ENCODE measurements at regions of chr3 and their contacts with region 1.

Region 1: DNA sequence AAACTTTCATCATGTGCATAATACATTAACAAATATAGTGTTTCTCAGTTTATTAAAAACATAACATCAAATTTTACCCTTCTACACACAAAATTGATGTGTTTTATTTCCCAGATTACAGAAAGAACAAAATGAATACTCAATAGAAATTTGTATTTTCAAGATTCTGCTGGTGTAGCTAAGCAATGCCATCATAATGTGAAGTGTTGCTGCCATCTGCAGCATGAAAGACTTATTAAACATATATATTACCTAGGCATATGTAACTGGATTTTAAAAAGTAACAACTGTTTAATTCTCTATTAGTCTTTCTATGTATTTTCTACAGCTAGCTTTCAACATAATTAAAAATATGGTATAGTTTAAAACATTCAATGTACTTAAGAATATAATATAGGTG is 27.5 kb downstream of the PLSCR5 start:
- DNase-seq: peak in 1 of 2 experiments; percentile 11
- H3K4me3 ChIP-seq: no peak overlapping the region
- H3K4me3 Mint-ChIP-seq: no peak overlapping the region
- H3K27ac Mint-ChIP-seq: no peak overlapping the region
- H3K4me1 ChIP-seq: peaks cover 26% of the 10 kb centered on the region
- H3K4me1 Mint-ChIP-seq: peaks cover 27% of the 10 kb centered on the region
- H3K27me3 ChIP-seq: no peaks in the 10 kb centered on the region
- H3K27me3 Mint-ChIP-seq: no peaks in the 10 kb centered on the region
- CTCF ChIP-seq: peak; percentile 19 to 36

Region 2: DNA sequence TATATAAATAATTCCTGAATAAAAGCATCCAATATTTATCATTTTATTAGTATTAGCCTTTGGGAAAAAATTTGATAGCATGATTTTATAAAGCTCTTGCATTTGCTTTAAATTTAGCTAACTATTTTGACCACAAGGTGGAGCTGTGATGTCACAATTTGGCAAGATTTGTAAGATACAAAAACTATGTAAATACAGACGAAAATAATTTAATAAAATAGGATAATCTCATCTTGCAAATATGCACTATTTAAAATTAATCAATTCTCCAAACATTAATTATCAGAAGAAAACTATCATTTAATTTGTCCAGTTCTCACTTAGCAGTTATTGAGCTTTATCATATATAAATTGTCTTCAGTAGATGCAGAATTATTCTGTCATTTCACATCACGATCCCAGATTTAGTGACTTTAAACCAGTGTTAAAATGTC is 512.1 kb before region 1 on chr3:
- CTCF ChIA-PET with region 1: interaction called, 4 read pairs
- POLR2A ChIA-PET with region 1: no interaction called
- intact Hi-C with region 1: loop called (anchors 10 kb)
- DNase-seq: peak in 1 of 2 experiments; percentile 53
- H3K4me3 ChIP-seq: no peak overlapping the region
- H3K4me3 Mint-ChIP-seq: no peak overlapping the region
- H3K27ac Mint-ChIP-seq: no peak overlapping the region
- H3K4me1 ChIP-seq: no peaks in the 10 kb centered on the region
- H3K4me1 Mint-ChIP-seq: no peaks in the 10 kb centered on the region
- H3K27me3 ChIP-seq: no peaks in the 10 kb centered on the region
- H3K27me3 Mint-ChIP-seq: no peaks in the 10 kb centered on the region
- CTCF ChIP-seq: peak; percentile 68 to 69

Region 3: GRCh38 chr3:146218880-146219866 is 358.5 kb before region 1 on chr3:
- CTCF ChIA-PET with region 1: interaction called, 4 read pairs
- POLR2A ChIA-PET with region 1: interaction called, 4 read pairs
- intact Hi-C with region 1: loop called (anchors 1 kb)
- DNase-seq: peak in 1 of 2 experiments; percentile 23
- H3K4me3 ChIP-seq: no peak overlapping the region
- H3K4me3 Mint-ChIP-seq: no peak overlapping the region
- H3K27ac Mint-ChIP-seq: no peak overlapping the region
- H3K4me1 ChIP-seq: peaks cover 40% of the 10 kb centered on the region
- H3K4me1 Mint-ChIP-seq: peaks cover 19% of the 10 kb centered on the region
- H3K27me3 ChIP-seq: no peaks in the 10 kb centered on the region
- H3K27me3 Mint-ChIP-seq: no peaks in the 10 kb centered on the region
- CTCF ChIP-seq: peak; percentile 61 to 74

Region 4: DNA sequence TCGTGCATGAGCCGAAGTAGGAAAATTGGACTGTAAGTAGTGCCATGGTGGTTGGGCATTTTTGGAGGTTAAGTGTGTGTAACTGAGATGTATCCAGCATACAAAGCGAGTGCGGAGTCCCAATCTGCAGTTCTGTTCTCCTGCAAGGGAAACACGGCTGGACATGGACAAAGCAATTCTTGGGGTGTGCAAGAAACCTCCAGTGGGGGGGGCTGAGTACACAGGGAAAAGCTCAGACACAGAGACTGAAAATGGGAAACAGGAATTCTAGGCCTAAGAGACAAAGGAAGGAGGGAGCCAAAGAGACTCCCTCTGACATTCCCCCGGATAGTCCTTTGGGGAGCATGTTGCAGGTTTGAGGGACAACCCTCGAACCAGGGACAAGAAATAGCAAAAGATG is 243.5 kb before region 1 on chr3:
- CTCF ChIA-PET with region 1: no interaction called
- POLR2A ChIA-PET with region 1: no interaction called
- intact Hi-C with region 1: loop called (anchors 1 kb)
- DNase-seq: peak in 1 of 2 experiments; percentile 30
- H3K4me3 ChIP-seq: no peak overlapping the region
- H3K4me3 Mint-ChIP-seq: no peak overlapping the region
- H3K27ac Mint-ChIP-seq: no peak overlapping the region
- H3K4me1 ChIP-seq: no peaks in the 10 kb centered on the region
- H3K4me1 Mint-ChIP-seq: no peaks in the 10 kb centered on the region
- H3K27me3 ChIP-seq: no peaks in the 10 kb centered on the region
- H3K27me3 Mint-ChIP-seq: no peaks in the 10 kb centered on the region
- CTCF ChIP-seq: peak; percentile 9 to 21

Region 5: DNA sequence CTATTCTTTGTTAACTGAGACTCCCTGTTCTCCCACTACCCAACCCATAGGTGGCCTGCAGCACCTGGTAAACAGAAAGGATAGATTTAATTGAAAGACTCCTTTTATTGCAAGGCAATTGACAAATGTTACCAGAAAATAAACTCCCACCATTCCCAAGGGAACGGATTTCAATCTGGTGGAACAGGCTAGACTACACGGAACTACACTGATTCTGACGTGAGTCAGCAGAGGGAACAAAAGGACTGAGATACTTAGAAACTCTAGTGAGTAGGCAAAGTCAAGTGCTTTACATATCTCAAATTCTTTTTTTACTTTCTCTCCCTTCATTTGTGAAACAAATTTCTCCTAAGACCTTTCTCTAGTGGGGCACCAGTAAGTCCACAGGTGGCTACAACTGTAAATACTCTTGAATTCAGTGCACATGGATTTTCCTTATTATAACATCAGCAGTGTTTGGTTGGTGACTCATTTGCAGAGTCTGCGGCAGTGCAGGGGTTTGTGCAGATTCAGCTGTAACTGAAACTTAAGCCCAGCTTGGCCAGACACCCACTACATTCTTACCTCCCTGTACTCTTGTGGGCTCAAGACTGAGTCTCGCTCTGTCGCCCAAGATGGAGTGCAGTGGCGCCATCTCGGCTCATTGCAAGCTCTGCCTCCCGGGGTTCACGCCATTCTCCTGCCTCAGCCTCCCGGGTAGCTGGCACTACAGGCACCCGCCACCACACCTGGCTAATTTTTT is 74.0 kb before region 1 on chr3:
- CTCF ChIA-PET with region 1: no interaction called
- POLR2A ChIA-PET with region 1: no interaction called
- intact Hi-C with region 1: loop called (anchors 1 kb)
- DNase-seq: peak in 1 of 2 experiments; percentile 36
- H3K4me3 ChIP-seq: no peak overlapping the region
- H3K4me3 Mint-ChIP-seq: peak overlapping the region; percentile 44
- H3K27ac Mint-ChIP-seq: peak overlapping the region; percentile 43
- H3K4me1 ChIP-seq: peaks cover 25% of the 10 kb centered on the region; the same call in 1 of the 2 replicates
- H3K4me1 Mint-ChIP-seq: peaks cover 17% of the 10 kb centered on the region
- H3K27me3 ChIP-seq: no peaks in the 10 kb centered on the region
- H3K27me3 Mint-ChIP-seq: no peaks in the 10 kb centered on the region
- CTCF ChIP-seq: peak in 1 of 2 experiments; percentile 18

Region 6: GRCh38 chr3:146626403-146627122 is 48.9 kb after region 1 on chr3:
- CTCF ChIA-PET with region 1: no interaction called
- POLR2A ChIA-PET with region 1: no interaction called
- intact Hi-C with region 1: loop called (anchors 2 kb)
- DNase-seq: peak; percentile 54 to 65
- H3K4me3 ChIP-seq: no peak overlapping the region
- H3K4me3 Mint-ChIP-seq: no peak overlapping the region
- H3K27ac Mint-ChIP-seq: no peak overlapping the region
- H3K4me1 ChIP-seq: no peaks in the 10 kb centered on the region
- H3K4me1 Mint-ChIP-seq: peaks cover 6% of the 10 kb centered on the region
- H3K27me3 ChIP-seq: no peaks in the 10 kb centered on the region
- H3K27me3 Mint-ChIP-seq: peaks cover 5% of the 10 kb centered on the region
- CTCF ChIP-seq: no peak